Right ventricle myocardium inferior (tissue), 1 donor: ENCODE measurements at regions of chr12 and their contacts with region 1.

Region 1: DNA sequence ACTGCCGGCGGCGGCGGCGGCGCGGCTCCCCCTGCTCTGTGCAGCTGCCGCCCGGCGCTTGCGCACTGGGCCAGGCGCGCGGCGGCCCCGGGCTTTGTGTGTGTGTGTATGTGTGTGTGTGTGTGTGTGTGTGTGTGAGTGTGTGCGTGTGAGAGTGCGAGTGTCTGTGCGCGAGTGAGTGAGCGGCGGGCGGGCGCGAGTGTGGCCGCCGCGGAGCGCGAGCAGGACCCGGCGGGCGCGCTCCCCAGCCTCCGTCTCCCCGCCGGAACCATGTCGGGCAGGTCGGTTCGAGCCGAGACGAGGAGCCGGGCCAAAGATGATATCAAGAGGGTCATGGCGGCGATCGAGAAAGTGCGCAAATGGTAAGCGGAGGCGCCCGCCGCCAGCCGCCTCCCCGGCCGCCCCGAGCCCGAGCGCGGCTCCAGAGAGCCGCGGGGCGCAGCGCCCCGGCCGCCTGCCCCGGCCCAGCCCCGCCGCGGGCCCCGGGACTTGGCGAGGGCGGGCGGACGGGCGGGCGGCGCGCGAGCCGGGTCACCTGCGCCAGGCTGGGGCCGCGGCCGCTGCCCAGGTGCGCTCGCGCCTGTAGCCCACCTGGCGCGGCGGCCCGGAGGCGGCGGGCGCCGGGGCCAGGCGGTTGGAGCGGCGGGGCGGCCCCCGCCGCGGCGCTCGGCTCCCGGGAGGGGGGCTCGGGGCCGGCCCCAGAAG is at the start of gene BCL7A:
- DNase-seq: peak; percentile 87
- ATAC-seq: peak; percentile 81
- total RNA-seq, gene BCL7A: 15.8 TPM

Region 2: GRCh38 chr12:121917979-121918678 is 103.8 kb before region 1 on chr12 and contains the start of gene CFAP251:
- intact Hi-C with region 1: loop called (anchors 5 kb)
- DNase-seq: peak; percentile 99
- ATAC-seq: peak; percentile 89
- total RNA-seq, gene CFAP251: 1.3 TPM

Region 3: DNA sequence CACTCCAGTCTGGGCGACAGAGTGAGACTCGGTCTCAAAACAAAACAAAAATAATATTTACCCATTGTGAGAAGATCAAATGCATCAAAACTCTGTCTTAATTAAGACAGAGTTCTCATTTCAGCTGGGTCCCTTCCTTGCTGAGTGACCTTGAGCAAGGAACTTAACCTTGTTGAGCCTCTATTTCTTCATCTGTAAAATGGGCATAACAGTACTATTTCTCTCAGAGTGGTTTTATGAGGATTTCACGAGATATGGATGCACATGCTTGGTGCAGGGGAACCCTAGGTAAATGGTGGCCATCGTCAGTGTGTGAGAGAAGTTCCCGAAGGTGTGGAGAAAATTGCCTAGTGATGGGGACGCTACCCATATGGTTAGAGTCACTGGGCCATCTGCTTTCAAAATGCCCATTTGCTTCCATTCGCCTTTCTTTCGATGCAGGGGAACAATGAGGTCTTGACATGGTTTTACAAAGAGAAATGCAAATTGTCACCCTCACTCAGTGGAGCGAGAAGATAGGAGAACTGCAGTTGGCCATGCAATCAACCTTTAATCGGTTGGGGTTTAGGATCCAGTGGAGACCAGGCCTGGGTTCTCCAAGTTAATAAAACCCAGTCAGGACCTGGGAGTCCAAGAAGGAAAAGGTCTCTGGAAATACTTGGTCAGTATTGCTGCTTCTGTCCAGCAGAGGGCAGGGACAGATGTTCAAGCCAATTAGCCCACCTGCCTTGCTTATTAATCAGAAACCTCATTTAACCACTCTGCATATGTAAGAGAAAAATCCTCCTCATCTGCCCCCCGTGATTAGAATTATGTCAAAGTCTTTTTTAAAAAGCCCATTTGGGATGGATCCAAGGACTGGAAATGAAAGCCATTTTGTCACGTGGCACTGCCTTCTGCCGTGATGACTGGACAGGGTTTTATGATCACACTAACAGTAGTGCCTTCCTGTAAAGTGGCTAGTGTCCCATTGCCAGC is 66.4 kb before region 1 on chr12:
- intact Hi-C with region 1: loop called (anchors 1 kb)
- DNase-seq: no peak
- ATAC-seq: no peak

Region 4: DNA sequence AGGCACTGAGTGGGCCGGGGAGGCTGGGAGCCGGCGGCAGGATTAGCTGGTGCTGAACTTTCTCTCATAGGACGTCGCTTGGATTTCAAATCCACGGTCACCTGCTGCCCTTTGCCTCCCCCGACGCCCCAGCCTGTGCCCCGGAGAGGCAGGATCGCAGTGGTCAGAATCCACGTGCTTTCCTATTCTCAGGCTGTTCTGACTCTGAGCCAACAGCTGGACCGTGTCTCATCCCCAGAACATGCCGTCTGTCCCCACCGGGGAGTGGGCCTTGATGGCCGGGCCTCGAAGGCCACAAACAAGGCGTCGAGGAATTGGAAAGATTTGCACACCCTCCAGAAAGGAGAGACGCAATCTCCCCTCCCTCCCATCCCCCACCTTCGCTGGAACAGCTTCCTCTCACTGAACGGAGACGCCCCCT is 38.1 kb after region 1 on chr12:
- intact Hi-C with region 1: no loop called
- DNase-seq: no peak
- ATAC-seq: no peak